Prostate gland (tissue), 2 donors: ENCODE measurements at regions of chr5 and their contacts with region 1.

Region 1: DNA sequence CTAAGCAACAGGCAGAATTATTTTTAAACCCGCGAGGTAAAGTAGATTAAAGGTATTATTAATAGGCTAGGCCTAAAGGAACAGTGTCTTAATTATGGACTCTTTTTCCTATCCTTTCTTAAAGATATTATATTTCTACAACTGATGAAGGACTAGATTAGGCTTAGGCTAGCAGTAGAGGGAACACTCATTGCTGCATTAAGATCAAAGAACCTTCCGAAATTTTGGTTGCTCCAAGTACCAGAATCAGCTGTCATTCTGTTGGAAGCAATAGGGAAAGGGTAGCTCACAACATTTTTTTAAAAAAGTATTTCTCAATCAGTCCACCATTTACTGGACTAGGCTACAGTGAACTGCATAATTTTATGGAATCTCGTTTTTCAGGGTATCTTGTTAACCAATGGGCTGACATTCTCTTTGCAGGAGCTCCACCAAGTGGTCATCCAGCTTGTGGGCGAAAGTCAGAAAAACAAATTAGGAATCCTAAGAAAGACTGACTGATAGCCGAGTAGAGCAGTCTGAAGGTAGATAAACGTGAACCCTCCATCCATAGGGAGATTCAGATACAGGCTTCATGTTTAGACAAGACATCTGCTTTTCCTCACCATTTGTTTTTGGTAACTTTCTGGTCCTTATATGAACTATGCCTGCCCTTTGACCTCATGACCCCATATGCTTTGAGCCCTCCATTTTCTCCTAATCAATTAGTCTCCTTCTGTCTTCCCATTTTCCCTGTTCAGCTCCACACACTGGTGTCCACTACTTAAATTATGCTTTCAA is 103.6 kb upstream of the CHD1 start:
- DNase-seq: peak; percentile 51
- H3K4me3 ChIP-seq: no peak overlapping the region
- H3K27ac ChIP-seq: peak overlapping the region; percentile 55 to 69
- H3K4me1 ChIP-seq: peaks cover 5% of the 10 kb centered on the region
- H3K27me3 ChIP-seq: no peaks in the 10 kb centered on the region
- CTCF ChIP-seq: peak in 3 of 4 experiments; percentile 52 to 73 (median 72)
- POLR2A ChIP-seq: no peak

Region 2: DNA sequence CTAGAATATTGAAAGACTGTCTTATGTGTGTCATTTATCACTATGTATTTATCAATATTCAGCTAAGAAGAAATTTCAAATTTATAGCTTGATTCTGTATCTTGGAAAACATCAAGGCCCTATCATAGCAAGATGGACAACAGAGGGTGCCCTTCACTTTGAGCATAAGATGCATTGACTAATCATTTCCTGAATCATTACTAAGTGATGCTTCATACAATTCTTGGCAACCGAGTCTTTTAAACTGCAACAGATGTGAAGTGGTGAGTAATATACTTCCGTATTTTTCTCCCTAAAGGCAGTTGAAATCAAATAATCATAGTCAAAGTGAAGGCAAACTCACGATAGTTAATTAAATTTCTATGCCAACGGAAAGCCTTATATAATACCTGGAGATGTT is 577.5 kb before region 1 on chr5:
- intact Hi-C with region 1: no loop called
- DNase-seq: no peak
- H3K4me3 ChIP-seq: no peak overlapping the region
- H3K27ac ChIP-seq: no peak overlapping the region
- H3K4me1 ChIP-seq: no peaks in the 10 kb centered on the region
- H3K27me3 ChIP-seq: no peaks in the 10 kb centered on the region
- CTCF ChIP-seq: no peak
- POLR2A ChIP-seq: no peak

Region 3: GRCh38 chr5:98905857-98906690 is 126.3 kb before region 1 on chr5:
- intact Hi-C with region 1: loop called (anchors 2 kb)
- DNase-seq: no peak
- H3K4me3 ChIP-seq: no peak overlapping the region
- H3K27ac ChIP-seq: no peak overlapping the region
- H3K4me1 ChIP-seq: no peaks in the 10 kb centered on the region
- H3K27me3 ChIP-seq: no peaks in the 10 kb centered on the region
- CTCF ChIP-seq: peak; percentile 50 to 88 (median 78)
- POLR2A ChIP-seq: no peak

Region 4: DNA sequence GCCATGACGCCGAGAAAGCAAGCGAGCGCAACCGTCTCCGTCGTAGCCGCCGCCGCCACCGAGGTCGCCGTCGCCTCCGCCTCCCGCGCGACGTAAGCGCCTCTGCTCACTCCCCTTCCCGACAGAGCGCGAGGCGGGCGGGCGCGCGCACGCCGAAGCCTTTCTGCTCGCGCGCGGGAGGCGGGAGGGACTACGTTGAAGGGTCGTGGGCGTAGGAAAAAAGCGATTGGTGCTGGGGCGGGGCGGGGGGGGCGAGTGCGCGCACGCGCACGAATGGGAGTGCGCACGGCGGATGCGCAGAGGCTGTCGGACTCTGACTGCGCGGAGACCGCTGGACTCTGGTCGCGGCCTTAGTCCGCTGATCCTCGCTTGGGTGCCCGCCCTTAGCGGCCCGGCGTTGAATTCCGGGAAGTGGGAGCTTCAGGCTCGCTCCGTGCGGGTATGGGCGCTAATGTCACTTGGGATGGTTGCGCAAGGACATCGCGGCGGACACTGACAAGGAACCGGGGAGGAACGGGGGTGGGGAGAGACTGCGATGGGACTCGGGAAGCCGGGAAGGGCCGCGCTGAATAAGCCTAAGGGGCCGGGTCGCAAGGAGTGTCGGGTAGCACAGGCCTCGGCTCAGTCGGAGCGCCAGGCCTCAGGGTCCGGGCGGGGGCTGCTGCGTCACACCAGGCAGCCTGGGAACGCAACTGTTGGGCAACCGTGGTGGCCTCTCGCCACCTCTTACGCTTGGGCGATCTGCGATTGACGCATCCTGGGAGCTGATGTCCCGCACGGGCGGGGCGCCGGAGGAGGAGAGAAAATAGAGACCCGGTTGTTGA is 103.3 kb before region 1 on chr5 and contains the start of gene CHD1:
- intact Hi-C with region 1: loop called (anchors 5 kb)
- DNase-seq: peak; percentile 93
- H3K4me3 ChIP-seq: peak within 1 kb of the TSS; percentile 85 to 88
- H3K27ac ChIP-seq: peak within 1 kb of the TSS; percentile 97 to 100
- H3K4me1 ChIP-seq: peaks cover 5% of the 10 kb centered on the region
- H3K27me3 ChIP-seq: no peaks in the 10 kb centered on the region
- CTCF ChIP-seq: peak in 1 of 4 experiments; percentile 3
- POLR2A ChIP-seq: peak; percentile 95
- total RNA-seq, gene CHD1: 38.5 to 52.9 TPM

Region 5: GRCh38 chr5:98975682-98976407 is 56.6 kb before region 1 on chr5:
- intact Hi-C with region 1: no loop called
- DNase-seq: no peak
- H3K4me3 ChIP-seq: no peak overlapping the region
- H3K27ac ChIP-seq: no peak overlapping the region
- H3K4me1 ChIP-seq: no peaks in the 10 kb centered on the region
- H3K27me3 ChIP-seq: no peaks in the 10 kb centered on the region
- CTCF ChIP-seq: no peak
- POLR2A ChIP-seq: no peak